GM12878 (cell line): ENCODE measurements at regions of chr4 and their contacts with region 1.

Region 1: DNA sequence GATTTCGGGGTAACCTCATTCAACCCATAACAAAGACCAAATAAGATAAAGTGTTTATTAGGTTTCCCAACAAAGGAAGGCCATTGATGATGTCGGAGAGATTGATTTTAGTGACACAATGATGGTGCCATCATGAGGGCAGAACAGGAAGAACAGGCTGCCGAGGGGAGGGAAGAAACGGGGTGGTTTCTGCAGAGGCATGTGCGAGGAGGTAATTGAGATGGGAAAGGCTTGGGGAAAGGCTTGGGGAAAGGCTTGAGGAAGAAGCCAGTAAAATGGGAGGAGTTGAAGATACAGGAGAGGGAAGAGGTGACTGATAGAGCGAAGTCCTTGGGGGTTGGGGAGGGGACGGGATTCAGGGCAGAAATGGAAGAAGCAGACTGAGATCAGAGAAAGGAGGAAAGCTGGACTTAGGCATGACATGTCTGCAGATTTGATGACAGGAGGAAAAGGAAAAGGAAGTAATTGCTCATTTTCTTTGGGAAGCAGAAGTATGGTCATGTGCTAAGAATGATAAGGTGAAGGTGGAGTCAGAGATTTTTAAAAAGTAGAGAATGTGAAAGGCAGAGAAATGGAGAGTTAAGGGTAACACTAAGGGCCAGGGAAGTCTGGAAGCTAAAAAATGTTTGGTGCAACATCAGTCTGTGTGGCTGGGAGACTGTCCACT is 6.0 kb downstream of the HPSE start:
- DNase-seq: no peak
- ATAC-seq: peak; percentile 71
- H3K4me3 ChIP-seq: no peak overlapping the region
- H3K27ac ChIP-seq: no peak overlapping the region
- H3K4me1 ChIP-seq: no peaks in the 10 kb centered on the region
- H3K27me3 ChIP-seq: no peaks in the 10 kb centered on the region
- CTCF ChIP-seq: peak; percentile 32 to 35 (median 32); a peak in 3 of 6 replicates
- EP300 ChIP-seq: no peak
- POLR2A ChIP-seq: no peak
- RAD21 ChIP-seq: no peak

Region 2: GRCh38 chr4:83054928-83055327 is 273.7 kb before region 1 on chr4:
- CTCF ChIA-PET with region 1: no interaction called
- POLR2A ChIA-PET with region 1: no interaction called
- RAD21 ChIA-PET with region 1: no interaction called
- SMC1A ChIA-PET with region 1: no interaction called
- in situ Hi-C with region 1: no loop called
- intact Hi-C with region 1: loop called (anchors 5 kb)
- DNase-seq: no peak
- ATAC-seq: peak; percentile 67
- H3K4me3 ChIP-seq: no peak overlapping the region
- H3K27ac ChIP-seq: no peak overlapping the region
- H3K4me1 ChIP-seq: no peaks in the 10 kb centered on the region
- H3K27me3 ChIP-seq: no peaks in the 10 kb centered on the region
- CTCF ChIP-seq: peak; percentile 19 to 48 (median 38); a peak in 3 of 6 replicates
- EP300 ChIP-seq: no peak
- POLR2A ChIP-seq: no peak
- RAD21 ChIP-seq: peak; percentile 51

Region 3: DNA sequence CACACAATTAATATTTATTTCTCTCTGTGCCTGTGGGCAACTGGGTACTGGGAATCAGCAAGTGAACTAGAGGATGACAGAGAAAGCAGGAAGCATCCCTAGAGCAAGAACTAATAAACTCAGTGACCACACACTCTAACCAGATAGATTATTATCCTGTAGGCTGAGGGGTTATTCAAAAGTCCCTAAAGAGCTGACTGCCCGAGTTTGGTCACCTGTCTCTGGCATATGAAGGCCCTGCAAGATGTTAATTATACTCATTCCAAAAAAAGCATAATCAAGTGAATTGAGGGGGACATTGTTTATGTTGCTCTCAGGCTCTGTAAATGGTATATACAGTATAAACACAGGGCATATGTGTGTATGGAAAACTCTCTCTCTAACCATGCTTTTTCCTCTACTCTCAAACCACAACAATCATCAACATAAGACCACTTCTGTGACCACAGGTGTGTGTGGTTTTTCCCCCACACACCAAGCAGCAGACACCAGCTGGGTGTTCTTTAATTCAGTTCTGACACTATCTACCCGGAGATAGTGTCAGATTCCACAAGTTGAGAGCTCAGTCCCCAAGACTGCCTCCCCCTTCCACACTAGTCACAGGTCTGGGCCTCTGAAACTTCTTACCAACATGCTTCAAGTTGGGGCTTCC is 12.2 kb after region 1 on chr4:
- CTCF ChIA-PET with region 1: no interaction called
- POLR2A ChIA-PET with region 1: no interaction called
- RAD21 ChIA-PET with region 1: no interaction called
- SMC1A ChIA-PET with region 1: no interaction called
- in situ Hi-C with region 1: no loop called
- intact Hi-C with region 1: no loop called
- DNase-seq: no peak
- ATAC-seq: peak; percentile 56
- H3K4me3 ChIP-seq: no peak overlapping the region
- H3K27ac ChIP-seq: no peak overlapping the region
- H3K4me1 ChIP-seq: peaks cover 4% of the 10 kb centered on the region; the same call in 1 of the 2 replicates
- H3K27me3 ChIP-seq: no peaks in the 10 kb centered on the region
- CTCF ChIP-seq: no peak
- EP300 ChIP-seq: no peak
- POLR2A ChIP-seq: no peak
- RAD21 ChIP-seq: no peak